PC-3 (cell line): ENCODE measurements at regions of chr1 and their contacts with region 1.

Region 1: DNA sequence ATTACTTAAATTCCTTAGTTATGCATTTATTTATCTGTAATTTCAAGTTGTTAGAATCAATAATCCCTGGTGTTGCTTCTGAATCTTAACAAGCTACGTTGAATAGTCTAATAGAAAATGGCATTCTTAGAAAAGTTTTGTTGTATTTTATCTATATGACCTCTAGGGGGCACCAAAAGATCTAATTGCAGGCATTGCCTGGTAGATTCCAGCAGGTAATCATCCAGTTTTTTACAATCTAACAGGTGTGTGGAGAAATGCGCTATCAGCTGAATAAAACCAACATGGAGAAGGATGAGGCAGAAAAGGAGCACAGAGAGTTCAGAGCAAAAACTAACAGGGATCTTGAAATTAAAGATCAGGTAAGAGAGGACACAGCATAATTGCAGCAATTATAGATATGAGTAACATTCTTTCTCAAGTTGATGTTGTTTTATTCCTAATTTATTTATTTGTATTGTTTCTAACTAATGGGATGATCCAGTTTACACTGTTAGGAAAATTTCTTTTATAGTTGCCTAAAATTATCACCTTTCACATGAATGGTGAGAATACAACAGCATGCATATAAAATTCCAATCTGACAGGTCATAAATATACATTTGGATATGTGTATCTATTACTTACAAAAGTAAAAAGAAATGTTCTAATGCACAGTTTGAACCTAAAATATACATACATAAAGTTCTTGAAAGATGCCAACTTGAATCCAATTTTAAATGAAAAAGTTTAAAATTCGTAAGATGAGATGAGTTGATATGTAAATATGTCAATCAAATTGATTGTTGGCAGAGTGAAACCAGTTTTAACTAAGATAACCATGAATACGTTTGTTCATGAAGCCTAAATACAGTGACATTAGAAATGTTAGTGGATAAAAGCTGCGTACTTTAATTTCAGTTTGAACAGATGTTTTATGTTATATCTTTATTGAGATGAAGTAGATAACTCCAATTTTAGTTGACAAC is 88.4 kb downstream of the SDCCAG8 start:
- DNase-seq: peak; percentile 88
- ATAC-seq: peak; percentile 61
- H3K4me3 ChIP-seq: no peak overlapping the region
- H3K27ac ChIP-seq: no peak overlapping the region
- H3K4me1 ChIP-seq: peaks cover 7% of the 10 kb centered on the region
- H3K27me3 ChIP-seq: no peaks in the 10 kb centered on the region
- CTCF ChIP-seq: peak; percentile 98

Region 2: GRCh38 chr1:243525085-243525487 is 180.8 kb after region 1 on chr1:
- CTCF ChIA-PET with region 1: interaction called, 16 read pairs
- POLR2A ChIA-PET with region 1: no interaction called
- intact Hi-C with region 1: no loop called
- DNase-seq: peak; percentile 88
- ATAC-seq: peak; percentile 89
- H3K4me3 ChIP-seq: no peak overlapping the region
- H3K27ac ChIP-seq: peak overlapping the region; percentile 60
- H3K4me1 ChIP-seq: peaks cover 11% of the 10 kb centered on the region
- H3K27me3 ChIP-seq: no peaks in the 10 kb centered on the region
- CTCF ChIP-seq: no peak

Region 3: GRCh38 chr1:243748706-243749283 is 404.5 kb after region 1 on chr1:
- CTCF ChIA-PET with region 1: no interaction called
- POLR2A ChIA-PET with region 1: no interaction called
- intact Hi-C with region 1: loop called (anchors 1 kb)
- DNase-seq: peak; percentile 90
- ATAC-seq: peak; percentile 100
- H3K4me3 ChIP-seq: no peak overlapping the region
- H3K27ac ChIP-seq: no peak overlapping the region
- H3K4me1 ChIP-seq: peaks cover 5% of the 10 kb centered on the region
- H3K27me3 ChIP-seq: no peaks in the 10 kb centered on the region
- CTCF ChIP-seq: peak; percentile 88

Region 4: DNA sequence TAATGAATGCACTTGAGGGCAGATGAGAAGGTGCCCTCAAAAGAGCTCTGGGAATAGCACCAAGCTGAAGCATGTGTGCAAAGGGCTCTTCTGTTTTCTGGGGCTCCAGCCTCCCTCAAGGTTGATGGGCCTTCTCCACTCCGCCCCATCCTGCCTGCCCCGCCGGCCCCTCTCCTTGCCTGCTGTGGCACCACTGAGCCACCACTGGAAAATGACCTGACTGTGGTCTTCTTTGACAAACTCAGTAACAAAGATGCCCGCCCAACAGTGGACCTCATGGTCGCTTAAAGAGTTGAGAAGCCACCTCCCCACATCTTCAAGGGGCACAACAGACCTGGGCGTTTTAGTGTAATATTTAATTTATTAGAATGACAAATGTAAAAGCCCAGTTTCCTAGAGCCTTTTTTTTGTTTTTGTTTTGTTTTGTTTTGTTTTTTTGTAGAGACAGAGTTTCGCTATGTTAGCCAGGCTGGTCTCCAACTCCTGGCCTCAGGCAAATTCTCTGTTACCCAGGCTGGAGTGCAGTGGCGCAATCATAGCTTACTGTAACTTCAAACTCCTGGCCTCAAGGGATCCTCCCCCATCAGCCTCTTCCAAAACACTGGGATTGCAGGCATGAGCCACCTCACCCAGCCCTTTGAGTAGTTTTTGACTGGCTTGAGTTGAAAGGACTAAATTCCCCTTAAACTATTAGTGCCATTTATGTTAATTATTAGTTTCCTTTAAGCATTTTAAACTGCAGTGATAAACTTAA is 677.9 kb after region 1 on chr1:
- CTCF ChIA-PET with region 1: no interaction called
- POLR2A ChIA-PET with region 1: no interaction called
- intact Hi-C with region 1: loop called (anchors 10 kb)
- DNase-seq: peak; percentile 39
- ATAC-seq: no peak
- H3K4me3 ChIP-seq: no peak overlapping the region
- H3K27ac ChIP-seq: no peak overlapping the region
- H3K4me1 ChIP-seq: no peaks in the 10 kb centered on the region
- H3K27me3 ChIP-seq: no peaks in the 10 kb centered on the region
- CTCF ChIP-seq: no peak